CD4-positive, alpha-beta T cell (primary cell): ENCODE measurements at regions of chr1 and their contacts with region 1.

Region 1: DNA sequence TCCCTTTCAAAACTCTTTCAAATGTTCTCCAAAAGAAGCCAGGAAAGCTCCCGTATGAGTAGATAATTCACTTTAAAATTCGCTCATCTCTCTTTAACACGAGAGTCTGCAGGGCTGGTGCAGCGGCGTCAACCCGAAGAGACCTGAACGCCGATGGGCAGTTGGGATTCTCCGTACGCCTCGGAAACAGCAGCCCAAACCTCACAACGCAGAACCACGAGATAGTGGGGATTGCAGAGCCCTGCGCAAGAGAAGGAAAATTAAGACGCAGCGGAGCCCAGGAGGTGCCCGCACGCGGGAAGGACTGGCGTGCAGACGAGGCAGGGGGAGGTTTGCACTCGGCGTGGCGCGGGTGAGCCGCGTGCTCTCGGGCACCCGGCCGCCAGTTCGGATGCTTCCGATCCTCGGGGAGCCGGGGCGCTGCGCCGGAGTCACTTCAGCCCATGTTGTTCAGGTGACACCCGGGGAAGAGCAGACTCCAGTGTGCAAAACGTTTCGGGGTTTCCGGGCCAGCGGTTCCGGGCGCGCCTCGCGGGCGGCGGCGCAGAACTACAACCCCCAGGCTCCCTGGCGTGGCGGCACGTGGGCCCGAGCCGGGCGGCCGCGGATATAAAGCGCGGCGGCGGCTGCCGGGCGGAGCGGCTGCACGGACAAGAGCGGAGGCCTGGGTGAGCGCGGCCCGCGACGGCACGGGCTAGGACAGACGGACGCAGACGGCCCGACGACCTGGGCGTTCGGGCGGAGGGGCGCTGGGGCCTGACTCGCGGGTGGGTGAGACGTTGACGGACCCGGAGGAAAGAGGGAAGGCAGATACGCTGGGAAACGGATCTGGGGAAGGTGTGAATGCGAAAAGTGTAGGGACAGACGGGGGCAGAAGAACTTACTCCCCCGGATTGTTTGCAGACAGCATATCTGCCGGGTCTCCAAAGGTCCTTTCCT is at the start of gene NPL:
- DNase-seq: peak; percentile 71 to 94 (median 82)
- ATAC-seq: peak; percentile 97
- H3K4me3 ChIP-seq: peak within 1 kb of the TSS; percentile 66
- H3K4me3 Mint-ChIP-seq: peak within 1 kb of the TSS; percentile 96
- H3K27ac ChIP-seq: peak within 1 kb of the TSS in 1 of 2 donors; percentile 51
- H3K27ac Mint-ChIP-seq: peak within 1 kb of the TSS; percentile 77
- H3K4me1 ChIP-seq: peaks cover 10% of the 10 kb centered on the region
- H3K4me1 Mint-ChIP-seq: peaks cover 7% of the 10 kb centered on the region
- H3K27me3 ChIP-seq: no peaks in the 10 kb centered on the region
- H3K27me3 Mint-ChIP-seq: no peaks in the 10 kb centered on the region
- CTCF ChIP-seq: no peak
- total RNA-seq, gene NPL: 0.63 to 1.7 TPM

Region 2: DNA sequence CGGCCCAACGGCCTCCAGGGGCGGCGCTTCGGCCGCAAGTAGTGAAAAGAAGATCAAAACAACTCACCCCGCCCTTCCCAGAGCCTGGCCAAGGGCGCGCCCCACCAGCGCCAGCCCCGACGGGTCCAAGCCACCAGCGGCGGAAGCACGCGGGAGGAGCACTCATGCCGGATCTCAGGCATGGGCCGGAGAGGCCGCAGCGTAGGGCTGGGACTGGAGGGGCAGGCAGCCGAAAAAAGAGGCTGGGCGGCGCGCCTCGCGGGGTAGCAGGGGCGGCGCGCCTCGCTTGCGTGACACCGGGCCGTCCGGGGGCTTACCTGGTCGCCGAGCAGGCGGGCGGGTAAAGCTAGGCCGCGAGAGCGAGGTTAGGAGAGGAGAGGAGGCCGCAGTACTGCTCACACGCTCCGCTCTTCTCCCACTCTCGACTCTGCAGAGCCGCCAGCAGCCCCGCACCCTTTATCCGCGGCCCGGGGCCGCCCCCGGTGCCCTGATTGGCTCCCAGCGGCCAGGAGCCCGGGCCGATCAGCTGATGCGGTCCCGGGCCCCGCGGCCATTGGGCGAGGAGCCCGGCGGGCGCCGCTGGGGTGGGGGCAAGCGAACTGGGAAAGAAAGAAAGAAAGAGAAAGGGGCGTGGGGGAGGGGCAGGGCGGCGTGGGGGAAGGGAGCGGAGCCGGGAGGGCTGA is 397.9 kb before region 1 on chr1 and contains the start of gene GLUL:
- CTCF ChIA-PET with region 1: no interaction called
- POLR2A ChIA-PET with region 1: no interaction called
- intact Hi-C with region 1: loop called in 1 of 2 experiments (anchors 5 kb)
- DNase-seq: peak; percentile 33 to 85 (median 60)
- ATAC-seq: peak; percentile 65
- H3K4me3 ChIP-seq: peak within 1 kb of the TSS; percentile 79
- H3K4me3 Mint-ChIP-seq: peak within 1 kb of the TSS; percentile 94
- H3K27ac ChIP-seq: peak within 1 kb of the TSS in 1 of 2 donors; percentile 17
- H3K27ac Mint-ChIP-seq: peak within 1 kb of the TSS; percentile 83
- H3K4me1 ChIP-seq: peaks cover 27% of the 10 kb centered on the region
- H3K4me1 Mint-ChIP-seq: peaks cover 34% of the 10 kb centered on the region
- H3K27me3 ChIP-seq: no peaks in the 10 kb centered on the region
- H3K27me3 Mint-ChIP-seq: peaks cover 8% of the 10 kb centered on the region
- CTCF ChIP-seq: no peak
- total RNA-seq, gene GLUL: 60.4 to 64.0 TPM

Region 3: DNA sequence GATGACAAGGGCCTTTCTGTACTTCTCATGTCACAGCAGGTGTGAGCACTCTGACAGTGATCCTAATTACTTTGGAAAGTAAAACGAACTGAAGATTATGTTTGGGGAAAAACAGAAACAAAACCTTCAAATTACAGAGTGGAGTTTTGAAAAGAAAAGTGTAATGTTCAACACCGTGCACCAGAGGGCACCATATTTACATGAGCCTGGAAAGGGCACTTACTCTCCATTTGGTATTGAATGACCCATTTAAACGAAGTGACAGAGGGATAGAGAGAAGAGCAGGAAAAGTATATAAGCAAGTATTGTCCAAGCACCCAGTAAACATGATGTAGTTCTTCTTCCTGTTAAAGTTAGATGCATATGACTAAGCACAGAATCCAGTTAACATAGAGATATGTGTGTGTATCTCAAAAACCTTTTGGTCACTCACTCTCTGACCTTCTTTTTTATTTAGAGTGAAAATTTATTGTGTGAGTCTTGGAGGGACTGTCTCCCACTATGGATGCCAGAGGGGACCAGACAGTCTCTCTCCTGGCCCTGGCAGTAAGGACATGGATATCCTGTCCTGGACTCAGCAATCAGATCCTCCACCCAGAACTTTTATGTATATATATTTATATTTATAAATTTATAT is 343.3 kb before region 1 on chr1:
- CTCF ChIA-PET with region 1: no interaction called
- POLR2A ChIA-PET with region 1: no interaction called
- intact Hi-C with region 1: loop called in 1 of 2 experiments (anchors 2 kb)
- DNase-seq: peak in 4 of 14 experiments; percentile 30 to 62 (median 43)
- ATAC-seq: no peak
- H3K4me3 ChIP-seq: no peak overlapping the region
- H3K4me3 Mint-ChIP-seq: no peak overlapping the region
- H3K27ac ChIP-seq: no peak overlapping the region
- H3K27ac Mint-ChIP-seq: no peak overlapping the region
- H3K4me1 ChIP-seq: no peaks in the 10 kb centered on the region
- H3K4me1 Mint-ChIP-seq: no peaks in the 10 kb centered on the region
- H3K27me3 ChIP-seq: no peaks in the 10 kb centered on the region
- H3K27me3 Mint-ChIP-seq: peaks cover 10% of the 10 kb centered on the region
- CTCF ChIP-seq: peak; percentile 65